Left lung (tissue), 14 donors: ENCODE measurements at regions of chr5 and their contacts with region 1.

Region 1: GRCh38 chr5:157312492-157312891 is 46.6 kb downstream of the CYFIP2 start:
- DNase-seq: peak in 2 of 4 donors; percentile 15 to 48
- ATAC-seq: peak; percentile 92
- H3K4me3 ChIP-seq: no peak overlapping the region
- H3K27ac ChIP-seq: no peak overlapping the region
- H3K4me1 ChIP-seq: no peaks in the 10 kb centered on the region
- H3K27me3 ChIP-seq: no peaks in the 10 kb centered on the region
- CTCF ChIP-seq: peak; percentile 48 to 53

Region 2: DNA sequence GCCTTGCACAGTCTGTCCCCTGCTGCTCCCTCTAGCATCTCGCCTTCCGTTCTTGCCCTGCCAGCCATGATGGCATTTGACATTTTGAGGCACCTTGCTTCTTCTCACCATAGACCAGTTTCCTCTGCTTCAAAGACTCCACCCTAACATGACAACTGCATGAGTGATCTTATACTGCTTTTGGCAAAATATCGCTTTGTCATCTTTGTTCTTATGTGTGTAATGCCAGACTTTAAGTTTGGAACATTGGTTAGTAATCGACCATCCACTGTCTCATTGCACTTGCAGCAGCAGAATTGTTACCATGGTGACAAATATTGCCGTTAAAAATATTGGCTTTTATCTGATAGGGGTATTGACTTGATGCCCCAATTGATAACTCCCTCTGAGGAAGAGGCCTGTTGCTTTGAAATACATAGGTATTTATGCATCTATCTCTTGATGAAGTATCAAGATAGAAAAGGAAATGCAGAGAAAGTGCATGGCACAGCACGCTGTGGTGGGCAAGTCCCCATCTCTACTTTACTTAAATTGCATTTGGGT is 153.2 kb before region 1 on chr5:
- intact Hi-C with region 1: loop called in 1 of 2 experiments (anchors 10 kb)
- DNase-seq: no peak
- ATAC-seq: no peak
- H3K4me3 ChIP-seq: no peak overlapping the region
- H3K27ac ChIP-seq: no peak overlapping the region
- H3K4me1 ChIP-seq: no peaks in the 10 kb centered on the region
- H3K27me3 ChIP-seq: peaks cover 0 to 8% of the 10 kb centered on the region in 2 donors
- CTCF ChIP-seq: no peak

Region 3: DNA sequence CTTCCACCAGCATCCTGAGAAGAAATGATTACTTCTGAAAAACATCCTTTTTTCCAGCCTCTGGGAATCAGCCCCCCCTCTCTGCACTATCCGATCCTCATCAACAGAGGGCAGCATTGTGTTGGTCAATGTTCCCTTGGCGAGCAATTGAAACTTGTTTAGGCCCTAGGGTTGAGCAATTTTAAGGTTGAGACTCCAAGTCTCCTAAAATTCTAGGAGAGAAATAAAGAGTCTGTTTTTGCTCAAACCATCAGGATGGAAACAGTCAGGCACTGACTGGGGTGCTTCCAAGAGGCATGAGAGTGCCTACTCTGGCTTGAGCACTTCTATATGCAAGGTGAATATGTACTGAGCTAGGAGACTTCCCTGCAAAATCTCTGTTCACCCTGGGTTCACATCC is 58.9 kb before region 1 on chr5:
- intact Hi-C with region 1: loop called in 1 of 2 experiments (anchors 10 kb)
- DNase-seq: no peak
- ATAC-seq: peak; percentile 95
- H3K4me3 ChIP-seq: no peak overlapping the region
- H3K27ac ChIP-seq: no peak overlapping the region
- H3K4me1 ChIP-seq: peaks cover 0 to 8% of the 10 kb centered on the region in 2 donors
- H3K27me3 ChIP-seq: no peaks in the 10 kb centered on the region
- CTCF ChIP-seq: peak; percentile 81 to 85

Region 4: DNA sequence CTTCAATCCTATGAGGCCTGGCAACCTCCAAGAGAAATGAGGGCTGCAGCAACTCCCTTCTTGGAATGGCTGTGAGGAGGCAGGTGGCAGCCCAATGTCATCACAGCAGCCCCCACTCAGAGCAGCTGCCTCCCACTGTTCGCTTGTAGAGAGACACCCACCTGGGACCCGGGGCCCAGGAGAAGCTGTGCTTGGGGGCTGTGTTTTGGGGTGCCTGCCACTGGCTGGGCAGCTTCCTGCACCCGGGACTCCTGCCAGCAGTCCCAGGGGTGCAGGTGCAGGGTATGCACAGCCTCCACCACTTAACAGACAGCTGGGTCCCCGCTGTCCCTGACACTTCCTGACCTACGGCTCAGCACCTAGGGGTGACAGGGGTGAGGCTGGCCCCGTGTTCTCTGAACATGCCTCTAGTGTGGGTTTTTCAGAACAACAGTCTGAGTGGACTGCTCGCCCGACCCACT is 173.8 kb after region 1 on chr5:
- intact Hi-C with region 1: no loop called
- DNase-seq: no peak
- ATAC-seq: no peak
- H3K4me3 ChIP-seq: no peak overlapping the region
- H3K27ac ChIP-seq: no peak overlapping the region
- H3K4me1 ChIP-seq: peaks cover 0 to 10% of the 10 kb centered on the region in 2 donors
- H3K27me3 ChIP-seq: no peaks in the 10 kb centered on the region
- CTCF ChIP-seq: no peak